ENCODE measurements at regions of chr3 and their contacts with region 1.

Region 1: DNA sequence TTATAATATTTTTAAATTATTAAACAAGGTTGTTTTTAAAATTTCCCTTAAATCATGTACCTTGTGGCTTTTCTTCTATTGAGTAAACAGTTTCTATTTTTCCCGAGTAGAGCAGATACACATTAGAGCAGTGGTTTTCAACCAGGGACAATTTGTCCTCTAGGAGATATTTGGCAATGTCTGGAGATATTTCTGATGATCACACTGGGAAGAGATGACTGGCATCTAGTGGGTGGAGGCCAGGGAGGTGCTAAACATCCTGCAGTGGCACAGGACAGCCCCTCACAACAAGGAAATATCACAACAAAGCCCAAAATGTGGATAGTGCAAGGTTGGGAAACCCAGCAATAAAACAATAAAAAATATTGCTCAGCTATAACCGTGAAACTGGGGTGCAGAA is 113.0 kb upstream of the PTPRG start:
- DNase-seq: peak in 1 of 2 donors; percentile 6
- ATAC-seq: peak in 7 of 8 donors; percentile 38 to 94 (median 69)
- H3K4me3 ChIP-seq: no peak overlapping the region
- H3K27ac ChIP-seq: peak overlapping the region in 5 of 10 donors; percentile 11 to 48 (median 27)
- H3K4me1 ChIP-seq: peaks cover 0 to 23% (median 10%) of the 10 kb centered on the region in 9 donors
- H3K27me3 ChIP-seq: no peaks in the 10 kb centered on the region
- CTCF ChIP-seq: no peak

Region 2: GRCh38 chr3:61141697-61142096 is 306.7 kb before region 1 on chr3:
- intact Hi-C with region 1: no loop called
- DNase-seq: no peak
- ATAC-seq: no peak
- H3K4me3 ChIP-seq: no peak overlapping the region
- H3K27ac ChIP-seq: no peak overlapping the region
- H3K4me1 ChIP-seq: no peaks in the 10 kb centered on the region
- H3K27me3 ChIP-seq: no peaks in the 10 kb centered on the region
- CTCF ChIP-seq: no peak

Region 3: GRCh38 chr3:61530355-61530754 is 82.0 kb after region 1 on chr3:
- intact Hi-C with region 1: loop called in 1 of 10 experiments (anchors 10 kb)
- DNase-seq: peak in 1 of 2 donors; percentile 23
- ATAC-seq: peak in 2 of 8 donors; percentile 51 to 52
- H3K4me3 ChIP-seq: no peak overlapping the region
- H3K27ac ChIP-seq: no peak overlapping the region
- H3K4me1 ChIP-seq: peaks cover 0 to 7% (median 0%) of the 10 kb centered on the region in 9 donors
- H3K27me3 ChIP-seq: no peaks in the 10 kb centered on the region
- CTCF ChIP-seq: peak; percentile 28 to 70 (median 53)